Activated CD8-positive, alpha-beta T cell treated with anti-CD3 and anti-CD28 coated beads for 36 hours (primary cell): ENCODE measurements at regions of chr16 and their contacts with region 1.

Region 1: GRCh38 chr16:31713071-31713944 is 160.3 kb upstream of the ZNF267 start:
- DNase-seq: peak; percentile 98
- ATAC-seq: peak; percentile 92
- H3K4me3 Mint-ChIP-seq: peak overlapping the region; percentile 87
- H3K27ac Mint-ChIP-seq: peak overlapping the region; percentile 98
- H3K4me1 Mint-ChIP-seq: peaks cover 51% of the 10 kb centered on the region
- H3K27me3 Mint-ChIP-seq: no peaks in the 10 kb centered on the region
- CTCF ChIP-seq: no peak

Region 2: GRCh38 chr16:31507929-31508705 is 205.2 kb before region 1 on chr16 and contains the start of gene RUSF1:
- CTCF ChIA-PET with region 1: no interaction called
- POLR2A ChIA-PET with region 1: interaction called, 9 read pairs
- intact Hi-C with region 1: loop called (anchors 10 kb)
- DNase-seq: peak; percentile 93
- ATAC-seq: peak; percentile 87
- H3K4me3 Mint-ChIP-seq: peak within 1 kb of the TSS; percentile 98
- H3K27ac Mint-ChIP-seq: peak within 1 kb of the TSS; percentile 98
- H3K4me1 Mint-ChIP-seq: peaks cover 45% of the 10 kb centered on the region
- H3K27me3 Mint-ChIP-seq: no peaks in the 10 kb centered on the region
- CTCF ChIP-seq: no peak
- total RNA-seq, gene RUSF1: 35.8 to 36.7 TPM

Region 3: DNA sequence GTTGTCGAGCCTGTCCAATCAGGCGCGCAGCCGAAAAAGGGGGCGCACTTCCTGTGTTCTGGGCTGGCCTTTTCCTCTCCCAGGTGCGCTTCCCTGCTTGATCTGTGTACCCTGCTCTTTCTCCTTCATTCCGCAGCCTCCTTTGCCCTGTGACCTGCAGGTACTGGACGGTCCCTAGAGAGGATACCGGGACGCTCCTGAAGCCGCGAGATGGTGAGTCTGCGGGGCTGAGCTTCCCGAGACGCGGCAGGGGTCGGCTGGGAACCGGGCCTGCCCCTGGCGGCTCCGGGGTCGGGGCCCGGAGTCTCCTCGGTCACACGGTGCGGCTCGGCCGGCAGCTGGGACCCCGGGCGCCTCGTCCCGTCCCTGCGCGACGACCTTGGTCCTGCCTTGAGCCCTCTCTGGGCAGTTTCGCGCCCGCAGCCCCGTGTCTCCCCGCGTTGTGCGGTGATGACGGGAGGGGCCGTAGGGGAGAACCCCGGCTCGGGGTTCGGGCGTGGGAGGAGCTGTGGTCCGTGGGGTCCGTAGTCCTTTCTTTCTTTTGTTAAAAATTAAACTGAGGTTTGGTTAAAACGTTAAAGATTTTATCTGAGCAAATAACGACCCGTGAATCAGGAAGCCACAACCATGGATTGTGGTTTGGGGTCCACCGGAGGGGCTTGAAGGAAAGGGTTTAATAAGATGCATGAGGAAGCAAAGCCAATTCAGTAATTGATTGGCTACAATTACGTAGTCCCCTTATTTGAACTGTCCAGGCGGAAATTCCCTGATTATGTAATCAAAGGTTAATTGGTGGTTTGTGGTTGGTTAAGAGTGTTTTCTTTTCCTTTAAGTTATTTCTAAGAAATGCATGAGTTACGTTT is 12.6 kb before region 1 on chr16:
- CTCF ChIA-PET with region 1: interaction called, 10 read pairs
- POLR2A ChIA-PET with region 1: interaction called, 151 read pairs
- intact Hi-C with region 1: no loop called
- DNase-seq: peak; percentile 97
- ATAC-seq: peak; percentile 90
- H3K4me3 Mint-ChIP-seq: peak overlapping the region; percentile 91
- H3K27ac Mint-ChIP-seq: peak overlapping the region; percentile 97
- H3K4me1 Mint-ChIP-seq: peaks cover 25% of the 10 kb centered on the region
- H3K27me3 Mint-ChIP-seq: no peaks in the 10 kb centered on the region
- CTCF ChIP-seq: no peak

Region 4: GRCh38 chr16:31819386-31819785 is 106.1 kb after region 1 on chr16:
- CTCF ChIA-PET with region 1: no interaction called
- POLR2A ChIA-PET with region 1: no interaction called
- intact Hi-C with region 1: no loop called
- DNase-seq: no peak
- ATAC-seq: no peak
- H3K4me3 Mint-ChIP-seq: no peak overlapping the region
- H3K27ac Mint-ChIP-seq: no peak overlapping the region
- H3K4me1 Mint-ChIP-seq: no peaks in the 10 kb centered on the region
- H3K27me3 Mint-ChIP-seq: peaks cover 19% of the 10 kb centered on the region
- CTCF ChIP-seq: no peak

Region 5: GRCh38 chr16:31873556-31874365 is 160.5 kb after region 1 on chr16 and contains the start of gene ZNF267:
- CTCF ChIA-PET with region 1: interaction called, 5 read pairs
- POLR2A ChIA-PET with region 1: interaction called, 10 read pairs
- intact Hi-C with region 1: no loop called
- DNase-seq: peak; percentile 98
- ATAC-seq: peak; percentile 67
- H3K4me3 Mint-ChIP-seq: peak within 1 kb of the TSS; percentile 97
- H3K27ac Mint-ChIP-seq: peak within 1 kb of the TSS; percentile 96
- H3K4me1 Mint-ChIP-seq: peaks cover 73% of the 10 kb centered on the region
- H3K27me3 Mint-ChIP-seq: no peaks in the 10 kb centered on the region
- CTCF ChIP-seq: no peak
- total RNA-seq, gene ZNF267: 67.7 to 70.2 TPM